ENCODE measurements at regions of chr18 and their contacts with region 1.

Region 1: GRCh38 chr18:76492669-76493212 is 2.3 kb downstream of the ZNF516 start:
- DNase-seq: peak; percentile 100
- H3K4me3 Mint-ChIP-seq: peak overlapping the region; percentile 93
- H3K27ac Mint-ChIP-seq: peak overlapping the region; percentile 74
- H3K4me1 Mint-ChIP-seq: peaks cover 23% of the 10 kb centered on the region
- H3K27me3 Mint-ChIP-seq: peaks cover 14% of the 10 kb centered on the region

Region 2: GRCh38 chr18:74597662-74598349 is 1894.9 kb before region 1 on chr18 and contains the start of gene ZNF407:
- CTCF ChIA-PET with region 1: no interaction called
- intact Hi-C with region 1: loop called (anchors 5 kb)
- DNase-seq: peak; percentile 91
- H3K4me3 Mint-ChIP-seq: peak within 1 kb of the TSS; percentile 86
- H3K27ac Mint-ChIP-seq: peak within 1 kb of the TSS; percentile 98
- H3K4me1 Mint-ChIP-seq: peaks cover 38% of the 10 kb centered on the region
- H3K27me3 Mint-ChIP-seq: no peaks in the 10 kb centered on the region
- total RNA-seq, gene ZNF407: 9.8 to 9.9 TPM

Region 3: DNA sequence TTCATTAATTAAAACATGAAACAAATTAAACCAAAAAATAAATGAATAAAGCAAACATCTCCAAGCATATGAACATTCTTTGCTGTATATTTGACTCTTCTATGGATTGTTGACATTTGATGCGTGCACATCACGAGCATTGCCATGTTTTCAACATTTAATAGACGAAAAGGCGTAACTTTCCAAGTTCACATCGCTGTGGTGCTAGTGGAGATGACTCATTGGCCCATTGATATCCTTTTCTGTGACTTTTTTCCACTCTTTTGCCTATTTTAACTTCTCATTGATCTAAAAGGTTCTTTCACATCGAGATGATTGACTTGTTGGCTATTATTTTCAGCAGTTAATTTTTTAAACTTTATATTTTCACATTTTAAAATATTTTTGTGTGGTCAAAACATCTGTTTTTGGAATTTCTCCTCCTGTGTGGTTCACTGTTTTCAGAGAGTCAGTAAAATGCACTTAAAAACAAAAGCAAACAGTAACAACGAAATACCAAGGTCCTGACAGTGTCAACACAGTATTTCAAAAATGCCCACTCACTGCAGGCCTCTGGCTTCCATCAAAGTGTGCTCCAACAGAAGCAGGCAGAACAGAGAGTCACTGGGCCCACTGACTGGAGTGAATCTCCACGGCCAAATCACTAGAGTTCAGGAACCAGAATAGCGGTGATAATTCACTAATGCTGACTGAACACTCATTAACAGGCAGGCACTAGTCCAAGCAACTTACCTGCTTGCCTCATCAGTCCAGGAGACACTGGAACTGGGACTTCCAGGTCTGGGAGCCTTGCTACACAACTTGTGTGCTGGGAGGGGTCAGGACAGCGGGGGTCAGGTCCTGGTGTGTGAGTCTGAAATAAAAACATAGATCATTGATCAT is 693.1 kb before region 1 on chr18:
- CTCF ChIA-PET with region 1: no interaction called
- intact Hi-C with region 1: no loop called
- DNase-seq: no peak
- H3K4me3 Mint-ChIP-seq: no peak overlapping the region
- H3K27ac Mint-ChIP-seq: no peak overlapping the region
- H3K4me1 Mint-ChIP-seq: no peaks in the 10 kb centered on the region
- H3K27me3 Mint-ChIP-seq: peaks cover 18% of the 10 kb centered on the region

Region 4: GRCh38 chr18:76195601-76196000 is 297.1 kb before region 1 on chr18:
- CTCF ChIA-PET with region 1: no interaction called
- intact Hi-C with region 1: no loop called
- DNase-seq: no peak
- H3K4me3 Mint-ChIP-seq: no peak overlapping the region
- H3K27ac Mint-ChIP-seq: no peak overlapping the region
- H3K4me1 Mint-ChIP-seq: no peaks in the 10 kb centered on the region
- H3K27me3 Mint-ChIP-seq: peaks cover 16% of the 10 kb centered on the region

Region 5: DNA sequence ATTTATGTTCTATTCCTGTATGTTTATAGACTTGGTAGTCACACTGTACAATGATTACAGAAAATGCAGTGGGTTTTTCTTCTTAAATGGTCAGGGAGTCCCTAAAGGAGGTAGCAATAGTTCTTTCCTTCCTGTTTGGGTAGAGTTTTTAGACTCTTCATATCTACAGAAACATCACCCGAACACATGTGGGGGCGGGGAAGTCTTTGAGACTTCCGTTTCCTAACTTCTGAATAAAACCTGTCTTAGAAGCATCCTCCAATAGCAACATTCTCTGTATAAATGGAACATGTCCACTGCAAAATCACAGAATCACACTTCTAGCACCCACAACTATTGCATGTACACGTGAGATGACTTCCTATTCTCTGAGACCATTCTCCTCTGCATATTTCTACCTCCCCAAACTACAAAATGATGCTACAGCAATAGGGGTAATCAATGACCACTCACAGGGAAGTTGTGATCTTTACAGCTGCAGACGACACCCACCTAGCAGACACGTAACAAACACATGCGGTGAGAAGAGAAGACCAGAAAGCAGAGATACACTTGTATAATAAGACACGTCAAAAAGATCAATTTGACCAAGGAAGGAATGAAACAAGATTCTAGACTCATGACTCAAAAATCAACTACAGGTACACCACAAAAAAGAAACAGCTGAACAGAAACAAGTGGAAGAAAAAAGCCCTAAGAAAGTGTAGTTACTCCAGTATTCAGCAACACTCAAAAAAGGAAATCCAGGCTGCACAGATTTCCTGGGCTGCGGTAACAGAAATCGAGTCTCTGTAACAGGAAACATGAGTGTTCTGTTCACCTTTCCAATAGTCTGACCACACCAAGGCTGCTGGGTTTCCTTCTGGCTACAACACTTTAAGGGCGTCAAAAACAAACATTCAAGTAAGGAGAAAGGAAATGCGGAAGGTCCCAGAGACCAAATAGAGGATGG is 118.1 kb before region 1 on chr18:
- CTCF ChIA-PET with region 1: no interaction called
- intact Hi-C with region 1: loop called (anchors 1 kb)
- DNase-seq: peak; percentile 80
- H3K4me3 Mint-ChIP-seq: no peak overlapping the region
- H3K27ac Mint-ChIP-seq: peak overlapping the region; percentile 74
- H3K4me1 Mint-ChIP-seq: peaks cover 46% of the 10 kb centered on the region
- H3K27me3 Mint-ChIP-seq: peaks cover 2% of the 10 kb centered on the region

Region 6: GRCh38 chr18:76410660-76411417 is 81.9 kb before region 1 on chr18:
- CTCF ChIA-PET with region 1: no interaction called
- intact Hi-C with region 1: loop called (anchors 2 kb)
- DNase-seq: peak; percentile 55
- H3K4me3 Mint-ChIP-seq: no peak overlapping the region
- H3K27ac Mint-ChIP-seq: no peak overlapping the region
- H3K4me1 Mint-ChIP-seq: peaks cover 21% of the 10 kb centered on the region
- H3K27me3 Mint-ChIP-seq: no peaks in the 10 kb centered on the region

Region 7: DNA sequence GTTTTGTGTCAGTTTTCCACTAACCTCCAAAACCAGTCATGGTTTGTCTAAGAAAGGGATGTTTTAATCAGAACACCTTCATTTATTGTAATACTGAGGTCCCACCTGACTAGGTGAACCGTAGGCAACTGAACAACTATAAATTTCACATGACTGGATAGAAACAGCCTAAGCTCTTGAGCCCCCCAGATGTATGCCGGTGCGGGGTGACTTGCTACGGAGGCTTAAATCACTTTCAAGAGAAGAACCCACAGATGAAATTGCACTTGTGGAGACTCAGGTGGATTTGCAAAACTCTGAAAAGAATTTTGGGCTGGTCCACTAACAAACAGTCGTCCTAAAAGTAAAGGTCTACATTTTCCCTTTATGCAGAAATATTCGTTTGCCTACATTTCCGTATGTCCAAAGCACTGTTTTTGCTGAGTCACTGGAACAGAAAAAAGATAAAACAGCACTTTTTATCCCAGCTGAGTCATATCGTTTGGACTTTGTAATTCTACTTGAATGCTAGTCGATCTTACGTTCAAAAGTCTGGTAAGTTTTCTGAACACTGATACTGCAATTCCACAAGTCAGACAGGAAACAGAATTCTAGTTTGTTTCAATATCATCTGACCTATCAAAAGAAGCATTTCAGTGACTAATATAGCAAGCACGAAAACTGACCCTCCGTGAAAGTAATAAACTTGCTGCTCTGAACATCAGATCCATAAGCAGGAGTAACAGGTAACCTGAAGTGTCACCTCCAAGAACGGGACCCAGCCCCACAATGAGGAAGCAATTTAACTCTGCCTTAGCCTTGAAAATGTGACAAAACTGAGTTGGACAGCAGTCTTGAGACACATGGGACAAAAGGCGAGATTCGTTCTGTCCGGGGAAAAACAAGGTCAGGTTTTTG is 15.8 kb before region 1 on chr18:
- CTCF ChIA-PET with region 1: no interaction called
- intact Hi-C with region 1: loop called (anchors 2 kb)
- DNase-seq: no peak
- H3K4me3 Mint-ChIP-seq: peak overlapping the region; percentile 41
- H3K27ac Mint-ChIP-seq: no peak overlapping the region
- H3K4me1 Mint-ChIP-seq: peaks cover 35% of the 10 kb centered on the region
- H3K27me3 Mint-ChIP-seq: peaks cover 8% of the 10 kb centered on the region

Region 8: DNA sequence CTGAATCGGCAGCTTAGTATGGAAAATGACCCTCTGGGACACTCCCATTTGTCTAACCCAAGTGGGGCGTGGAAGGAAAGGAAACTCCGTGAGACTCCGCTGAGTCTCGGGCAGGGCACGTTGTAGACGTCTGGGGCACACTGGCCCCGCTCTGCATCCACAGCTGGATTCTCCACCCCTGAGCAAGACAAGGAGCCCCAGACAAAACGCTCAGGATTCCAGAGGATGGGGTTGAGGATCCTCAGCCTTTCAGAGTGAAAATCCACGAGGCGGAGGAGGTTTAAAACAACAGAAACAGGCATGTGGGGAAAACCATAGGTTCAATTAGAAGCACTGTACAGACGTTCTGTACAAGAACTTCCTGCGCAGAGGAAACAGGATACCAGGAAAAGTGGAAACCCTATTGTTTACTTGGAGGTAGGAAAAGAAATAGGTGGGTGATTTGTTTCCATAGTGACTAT is 204.7 kb after region 1 on chr18:
- CTCF ChIA-PET with region 1: no interaction called
- intact Hi-C with region 1: no loop called
- DNase-seq: no peak
- H3K4me3 Mint-ChIP-seq: no peak overlapping the region
- H3K27ac Mint-ChIP-seq: no peak overlapping the region
- H3K4me1 Mint-ChIP-seq: no peaks in the 10 kb centered on the region
- H3K27me3 Mint-ChIP-seq: peaks cover 16% of the 10 kb centered on the region

Region 9: GRCh38 chr18:76822510-76823160 is 329.9 kb after region 1 on chr18 and contains the start of gene ZNF236:
- CTCF ChIA-PET with region 1: no interaction called
- intact Hi-C with region 1: loop called (anchors 5 kb)
- DNase-seq: peak; percentile 57
- H3K4me3 Mint-ChIP-seq: peak within 1 kb of the TSS; percentile 90
- H3K27ac Mint-ChIP-seq: peak within 1 kb of the TSS; percentile 92
- H3K4me1 Mint-ChIP-seq: peaks cover 51% of the 10 kb centered on the region
- H3K27me3 Mint-ChIP-seq: no peaks in the 10 kb centered on the region
- total RNA-seq, gene ZNF236: 13.7 to 17.7 TPM